Heart right ventricle (tissue), 16 donors: ENCODE measurements at regions of chr7 and their contacts with region 1.

Region 1: DNA sequence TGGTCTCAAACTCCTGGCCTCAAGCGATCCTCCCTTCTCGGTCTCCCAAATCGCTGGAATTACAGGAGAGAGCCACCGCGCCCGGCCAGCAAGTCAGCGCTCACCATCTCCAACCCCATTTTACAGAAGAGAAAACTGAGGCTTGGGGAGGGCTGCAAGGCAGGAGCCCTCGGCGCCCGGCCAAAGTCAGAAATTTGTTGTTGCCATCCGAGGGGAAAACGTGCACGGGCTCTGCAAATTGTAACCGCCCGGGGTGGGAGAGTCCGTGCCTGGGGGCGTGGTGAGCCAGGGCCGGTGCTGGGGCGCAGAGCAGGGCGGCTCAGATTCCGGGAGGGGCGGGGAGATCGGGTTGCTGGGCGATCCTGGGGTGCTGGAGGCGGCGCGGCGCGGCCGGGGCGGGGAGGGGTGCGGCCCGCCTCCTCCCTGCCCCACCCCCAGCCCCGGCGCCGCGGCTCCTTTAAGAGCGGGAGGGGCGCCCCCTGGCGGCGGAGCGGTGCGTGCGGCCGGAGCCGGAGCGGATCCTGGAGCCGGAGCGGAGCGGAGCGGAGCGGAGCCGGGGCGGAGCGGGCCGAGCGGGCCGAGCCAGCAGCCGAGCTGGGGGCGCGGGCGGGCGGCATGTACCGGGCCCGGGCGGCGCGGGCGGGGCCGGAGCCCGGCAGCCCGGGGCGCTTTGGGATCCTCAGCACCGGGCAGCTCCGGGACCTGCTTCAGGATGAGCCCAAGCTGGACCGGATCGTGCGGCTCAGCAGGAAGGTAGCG is at the start of gene VPS37D:
- DNase-seq: peak; percentile 87 to 95
- ATAC-seq: peak; percentile 88 to 97 (median 95)
- H3K4me3 ChIP-seq: peak within 1 kb of the TSS; percentile 53 to 93 (median 60)
- H3K27ac ChIP-seq: peak within 1 kb of the TSS in 1 of 10 donors; percentile 34
- H3K4me1 ChIP-seq: peaks cover 0 to 15% (median 10%) of the 10 kb centered on the region in 9 donors
- H3K27me3 ChIP-seq: peaks cover 0 to 58% (median 0%) of the 10 kb centered on the region in 7 donors
- CTCF ChIP-seq: peak; percentile 58 to 96 (median 78)
- total RNA-seq, gene VPS37D: 1.1 to 3.6 (median 2.2) TPM

Region 2: GRCh38 chr7:73712773-73713172 is 45.2 kb after region 1 on chr7:
- intact Hi-C with region 1: loop called in 1 of 10 experiments (anchors 5 kb)
- DNase-seq: no peak
- ATAC-seq: no peak
- H3K4me3 ChIP-seq: no peak overlapping the region
- H3K27ac ChIP-seq: no peak overlapping the region
- H3K4me1 ChIP-seq: peaks cover 0 to 23% (median 6%) of the 10 kb centered on the region in 9 donors
- H3K27me3 ChIP-seq: peaks cover 0 to 30% (median 0%) of the 10 kb centered on the region in 7 donors
- CTCF ChIP-seq: no peak

Region 3: DNA sequence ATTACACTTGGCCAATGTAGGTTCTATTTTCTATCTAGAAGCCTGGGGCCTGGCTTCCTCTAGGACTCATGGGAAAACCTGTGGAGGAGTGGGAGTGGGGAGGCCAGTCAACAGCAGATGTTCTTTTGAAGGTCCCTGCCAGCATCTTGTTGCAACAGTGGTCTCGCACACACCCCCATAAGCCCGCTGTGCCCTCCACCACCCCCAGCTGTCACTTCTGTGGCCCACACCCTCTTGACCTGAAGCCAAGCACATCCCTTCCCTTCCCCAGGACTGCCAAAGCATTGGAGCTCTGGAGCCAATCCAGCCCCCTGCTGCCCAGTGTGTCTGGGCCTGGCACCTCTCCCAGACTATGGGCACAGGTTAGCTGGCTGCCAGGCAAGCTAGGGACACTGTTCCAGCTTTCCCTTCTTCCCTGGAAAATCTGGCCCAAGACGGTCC is 53.9 kb after region 1 on chr7:
- intact Hi-C with region 1: loop called in 1 of 10 experiments (anchors 10 kb)
- DNase-seq: peak; percentile 72 to 78
- ATAC-seq: peak; percentile 21 to 89 (median 82)
- H3K4me3 ChIP-seq: no peak overlapping the region
- H3K27ac ChIP-seq: peak overlapping the region in 7 of 10 donors; percentile 15 to 63 (median 25)
- H3K4me1 ChIP-seq: peaks cover 0 to 44% (median 24%) of the 10 kb centered on the region in 9 donors
- H3K27me3 ChIP-seq: peaks cover 0 to 52% (median 6%) of the 10 kb centered on the region in 7 donors
- CTCF ChIP-seq: no peak

Region 4: GRCh38 chr7:73734619-73735527 is 67.3 kb after region 1 on chr7:
- intact Hi-C with region 1: no loop called
- DNase-seq: peak; percentile 50 to 68
- ATAC-seq: peak in 3 of 8 donors; percentile 5 to 33 (median 10)
- H3K4me3 ChIP-seq: no peak overlapping the region
- H3K27ac ChIP-seq: peak overlapping the region in 1 of 10 donors; percentile 50
- H3K4me1 ChIP-seq: peaks cover 6 to 22% (median 15%) of the 10 kb centered on the region in 9 donors
- H3K27me3 ChIP-seq: no peaks in the 10 kb centered on the region
- CTCF ChIP-seq: peak; percentile 37 to 89 (median 63)

Region 5: GRCh38 chr7:73758581-73759138 is 91.1 kb after region 1 on chr7:
- intact Hi-C with region 1: no loop called
- DNase-seq: no peak
- ATAC-seq: no peak
- H3K4me3 ChIP-seq: no peak overlapping the region
- H3K27ac ChIP-seq: no peak overlapping the region
- H3K4me1 ChIP-seq: no peaks in the 10 kb centered on the region
- H3K27me3 ChIP-seq: no peaks in the 10 kb centered on the region
- CTCF ChIP-seq: no peak